Left ventricle myocardium superior (tissue), 1 donor: ENCODE measurements at regions of chr1 and their contacts with region 1.

Region 1: GRCh38 chr1:65687428-65688214 is 105.1 kb upstream of the PDE4B start:
- DNase-seq: peak; percentile 88
- ATAC-seq: peak; percentile 86

Region 2: GRCh38 chr1:65067491-65068201 is 620.0 kb before region 1 on chr1:
- intact Hi-C with region 1: loop called (anchors 5 kb)
- DNase-seq: peak; percentile 79
- ATAC-seq: peak; percentile 42

Region 3: DNA sequence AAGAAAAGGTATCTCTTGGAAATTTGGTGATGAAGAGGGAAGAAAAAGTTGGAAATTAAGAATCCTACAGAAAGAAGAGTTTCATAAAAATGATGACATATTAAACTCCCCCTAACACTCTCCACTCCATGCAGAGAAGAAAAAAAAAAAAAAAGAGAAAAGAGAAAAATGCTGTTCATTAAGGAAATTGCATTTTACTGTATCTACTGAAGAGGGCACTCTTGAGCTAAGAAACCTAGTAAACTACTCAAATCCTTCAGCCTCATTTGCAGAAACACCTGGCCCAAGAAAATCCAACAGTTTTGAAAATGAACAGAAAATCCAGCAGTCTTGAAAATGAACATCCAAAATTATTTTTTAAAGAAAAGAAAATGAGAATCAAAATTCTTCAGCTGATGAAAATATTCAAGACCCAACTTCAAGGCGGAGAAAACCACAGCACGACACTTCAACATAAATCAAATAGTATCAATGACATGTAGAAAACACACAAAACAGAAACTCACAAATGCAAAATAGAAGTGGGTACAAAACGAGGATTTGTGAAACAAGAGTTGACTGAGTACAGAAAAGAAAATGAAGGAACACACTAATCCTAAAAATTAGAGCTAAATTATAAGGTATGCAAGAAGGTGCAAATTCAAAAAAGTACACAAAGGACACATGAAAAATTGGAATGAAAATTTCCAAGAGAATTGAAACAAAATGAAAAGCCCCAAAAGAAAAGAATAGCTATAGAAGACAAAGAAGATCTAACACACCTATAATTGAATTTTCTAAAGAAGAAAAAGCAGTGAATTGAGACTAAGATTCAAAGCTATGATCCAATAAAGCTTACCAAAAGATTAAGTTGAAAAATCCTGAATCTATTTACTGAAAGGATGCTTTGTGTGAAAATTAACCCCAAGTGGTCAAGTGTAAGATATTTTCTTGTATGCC is 451.5 kb before region 1 on chr1:
- intact Hi-C with region 1: loop called (anchors 10 kb)
- DNase-seq: no peak
- ATAC-seq: no peak

Region 4: DNA sequence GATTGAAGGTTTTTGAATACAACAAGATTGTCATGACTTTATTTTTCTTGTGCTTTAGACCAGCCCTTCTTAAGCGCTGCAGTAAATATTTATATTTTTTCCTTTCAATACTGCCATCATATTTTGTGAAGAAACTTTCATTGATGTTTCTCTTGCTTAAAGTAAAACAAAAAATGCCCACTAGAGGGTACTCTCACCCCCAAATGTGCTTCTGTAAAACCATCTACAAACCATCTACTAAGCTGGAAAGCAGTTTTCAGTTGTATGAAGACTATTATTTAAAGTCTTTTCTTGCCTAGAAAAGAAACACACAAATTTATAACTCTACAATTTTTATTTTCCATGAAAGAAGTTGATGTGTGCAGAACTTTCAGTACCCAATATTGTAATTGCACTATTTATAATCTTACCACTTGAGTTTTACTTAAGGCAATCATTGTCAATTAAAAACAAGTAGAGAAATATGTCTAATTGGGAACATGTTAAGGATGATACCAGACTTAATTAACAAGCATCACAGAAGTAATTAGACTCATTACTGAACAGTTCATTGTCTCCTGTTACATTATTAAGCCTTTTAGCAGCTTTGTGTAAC is 256.4 kb before region 1 on chr1:
- intact Hi-C with region 1: loop called (anchors 5 kb)
- DNase-seq: no peak
- ATAC-seq: no peak